HepG2 (cell line): ENCODE measurements at regions of chr7 and their contacts with region 1.

Region 1: GRCh38 chr7:2451171-2452073 is 24.8 kb downstream of the GRIFIN start:
- DNase-seq: peak; percentile 70
- ATAC-seq: peak; percentile 95
- H3K4me3 ChIP-seq: peak overlapping the region; percentile 53 to 76 (median 58)
- H3K27ac ChIP-seq: peak overlapping the region; percentile 51
- H3K4me1 ChIP-seq: peaks cover 42% of the 10 kb centered on the region
- H3K27me3 ChIP-seq: no peaks in the 10 kb centered on the region; a peak in 1 of 5 replicates
- CTCF ChIP-seq: peak; percentile 99
- EP300 ChIP-seq: no peak
- POLR2A ChIP-seq: 0 out of 4 replicates have a peak, but pooled peaks of 1 of the 2 experiments have one; percentile 21
- RAD21 ChIP-seq: peak; percentile 96

Region 2: DNA sequence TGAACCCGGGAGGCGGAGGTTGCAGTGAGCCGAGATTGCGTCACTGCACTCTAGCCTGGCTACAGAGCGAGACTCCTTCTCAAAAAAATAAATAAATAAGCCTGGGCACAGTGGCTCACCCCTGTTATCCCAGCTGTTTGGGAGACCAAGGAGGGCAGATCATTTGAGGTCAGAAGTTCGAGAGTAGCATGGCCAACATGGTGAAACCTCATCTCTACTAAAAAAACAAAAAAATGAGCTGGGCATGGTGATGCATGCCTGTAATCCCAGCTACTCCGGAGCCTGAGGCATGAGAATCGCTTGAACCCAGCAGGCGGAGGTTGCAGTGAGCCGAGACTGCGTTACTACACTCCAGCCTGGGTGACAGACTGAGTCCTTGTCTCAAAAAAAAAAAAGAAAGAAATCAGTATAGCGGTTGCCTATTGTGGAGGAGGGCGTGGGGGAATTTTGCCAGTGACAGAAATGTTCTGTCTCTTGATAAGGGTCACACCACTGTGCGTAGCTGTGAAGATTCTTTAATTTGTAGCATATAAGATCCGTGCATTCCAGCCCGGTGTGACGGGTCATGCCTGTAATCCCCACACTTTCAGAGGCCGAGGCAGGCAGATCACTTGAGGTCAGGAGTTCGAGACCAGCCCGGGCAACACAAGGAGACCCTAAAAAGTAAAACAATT is 114.7 kb before region 1 on chr7:
- CTCF ChIA-PET with region 1: no interaction called
- POLR2A ChIA-PET with region 1: no interaction called
- in situ Hi-C with region 1: no loop called
- intact Hi-C with region 1: no loop called
- DNase-seq: no peak
- ATAC-seq: no peak
- H3K4me3 ChIP-seq: no peak overlapping the region
- H3K27ac ChIP-seq: no peak overlapping the region
- H3K4me1 ChIP-seq: peaks cover 12% of the 10 kb centered on the region
- H3K27me3 ChIP-seq: no peaks in the 10 kb centered on the region
- CTCF ChIP-seq: no peak
- EP300 ChIP-seq: no peak
- POLR2A ChIP-seq: no peak
- RAD21 ChIP-seq: no peak

Region 3: DNA sequence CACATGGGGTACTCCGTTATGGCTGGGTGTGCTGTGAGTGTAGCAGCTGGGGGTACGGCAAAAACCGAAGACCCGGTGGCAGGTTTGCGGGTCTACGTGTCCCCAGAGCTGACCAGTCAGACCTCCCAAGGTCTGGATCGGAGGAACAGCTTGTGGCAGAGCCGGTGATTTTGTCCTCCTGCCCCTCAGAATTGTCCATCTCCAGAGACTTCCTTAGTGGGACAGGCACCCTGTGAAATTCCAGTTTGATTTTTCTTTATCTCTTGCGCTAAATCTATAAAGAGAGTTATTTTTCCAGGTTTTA is 95.8 kb before region 1 on chr7:
- CTCF ChIA-PET with region 1: no interaction called
- POLR2A ChIA-PET with region 1: no interaction called
- in situ Hi-C with region 1: no loop called
- intact Hi-C with region 1: no loop called
- DNase-seq: no peak
- ATAC-seq: no peak
- H3K4me3 ChIP-seq: peak overlapping the region; percentile 96 to 98 (median 97)
- H3K27ac ChIP-seq: peak overlapping the region; percentile 100
- H3K4me1 ChIP-seq: peaks cover 62% of the 10 kb centered on the region
- H3K27me3 ChIP-seq: no peaks in the 10 kb centered on the region; a peak in 1 of 5 replicates
- CTCF ChIP-seq: no peak
- EP300 ChIP-seq: no peak
- POLR2A ChIP-seq: no peak
- RAD21 ChIP-seq: no peak

Region 4: DNA sequence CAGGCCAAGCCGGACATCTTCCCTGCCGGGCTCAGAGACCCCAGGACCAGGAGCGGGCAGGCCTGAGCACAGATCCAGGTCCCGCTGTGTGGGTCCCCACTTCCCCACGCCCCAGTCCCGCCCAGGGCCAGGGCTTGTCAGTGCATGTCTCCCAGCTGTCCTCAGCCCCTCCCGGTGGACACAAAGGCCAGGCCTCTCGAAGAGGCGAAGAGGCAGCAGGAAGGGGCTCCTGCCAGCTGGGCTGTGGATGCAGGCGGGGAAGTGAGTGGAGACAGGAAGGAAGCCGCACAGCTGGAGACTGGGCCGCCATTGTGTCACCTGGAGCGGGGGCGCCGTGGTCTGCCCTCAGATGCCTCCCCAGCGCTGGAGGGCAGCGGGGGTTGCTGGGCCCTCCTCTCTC is 20.0 kb after region 1 on chr7:
- CTCF ChIA-PET with region 1: interaction called, 24 read pairs
- POLR2A ChIA-PET with region 1: interaction called, 22 read pairs
- in situ Hi-C with region 1: no loop called
- intact Hi-C with region 1: loop called (anchors 1 kb)
- DNase-seq: no peak
- ATAC-seq: no peak; the same call in 2 of the 3 replicates
- H3K4me3 ChIP-seq: 0 out of 6 replicates have a peak overlapping the region, but pooled peaks of 1 of the 3 experiments have one; percentile 28
- H3K27ac ChIP-seq: no peak overlapping the region
- H3K4me1 ChIP-seq: peaks cover 45% of the 10 kb centered on the region
- H3K27me3 ChIP-seq: peaks cover 8 to 31% of the 10 kb centered on the region in 2 experiments; a peak in 4 of 5 replicates
- CTCF ChIP-seq: 0 out of 2 replicates have a peak, but pooled peaks have one; percentile 12
- EP300 ChIP-seq: no peak
- POLR2A ChIP-seq: no peak
- RAD21 ChIP-seq: no peak

Region 5: GRCh38 chr7:2680792-2681490 is 229.5 kb after region 1 on chr7:
- CTCF ChIA-PET with region 1: interaction called, 3 read pairs
- POLR2A ChIA-PET with region 1: no interaction called
- in situ Hi-C with region 1: no loop called
- intact Hi-C with region 1: loop called (anchors 5 kb)
- DNase-seq: peak; percentile 55
- ATAC-seq: peak; percentile 78
- H3K4me3 ChIP-seq: no peak overlapping the region
- H3K27ac ChIP-seq: no peak overlapping the region
- H3K4me1 ChIP-seq: peaks cover 15% of the 10 kb centered on the region
- H3K27me3 ChIP-seq: peaks cover 5 to 49% of the 10 kb centered on the region in 2 experiments; a peak in 4 of 5 replicates
- CTCF ChIP-seq: peak; percentile 94
- EP300 ChIP-seq: no peak
- POLR2A ChIP-seq: no peak
- RAD21 ChIP-seq: peak; percentile 76